ENCODE measurements at regions of chr1 and their contacts with region 1.

Region 1: GRCh38 chr1:230186003-230186863 is 119.2 kb downstream of the GALNT2 start:
- DNase-seq: peak; percentile 100
- ATAC-seq: peak; percentile 99
- H3K4me3 ChIP-seq: peak overlapping the region; percentile 43
- H3K27ac ChIP-seq: peak overlapping the region; percentile 65
- H3K4me1 ChIP-seq: peaks cover 23% of the 10 kb centered on the region
- H3K27me3 ChIP-seq: no peaks in the 10 kb centered on the region
- CTCF ChIP-seq: no peak

Region 2: DNA sequence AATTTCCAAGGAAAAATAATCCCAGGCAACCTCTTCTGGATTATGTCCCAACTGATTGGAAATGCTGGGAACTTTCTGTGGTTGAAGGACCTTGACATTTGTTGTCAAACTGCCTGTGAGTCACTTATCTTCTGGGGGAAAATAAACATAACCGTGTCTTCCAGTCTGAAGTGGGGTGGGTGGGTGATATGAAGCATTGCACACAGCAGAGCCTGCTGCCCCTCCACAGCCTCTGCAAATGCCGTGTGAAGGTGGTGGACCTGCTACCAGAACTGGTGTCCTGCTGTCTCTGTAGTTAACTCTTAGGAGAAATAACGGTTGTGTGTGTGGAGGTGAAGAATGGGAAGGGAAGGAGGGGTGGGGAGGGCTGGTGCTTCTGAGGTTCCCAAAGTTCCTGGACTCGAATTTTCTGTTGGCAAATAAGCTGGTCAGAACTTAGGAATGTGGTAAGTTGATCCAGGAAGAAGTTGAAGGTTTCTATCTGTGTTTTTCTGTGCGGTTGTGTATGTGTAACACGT is 96.0 kb before region 1 on chr1:
- CTCF ChIA-PET with region 1: no interaction called
- POLR2A ChIA-PET with region 1: interaction called, 5 read pairs
- intact Hi-C with region 1: loop called (anchors 1 kb)
- DNase-seq: peak; percentile 96
- ATAC-seq: peak; percentile 69
- H3K4me3 ChIP-seq: peak overlapping the region; percentile 49
- H3K27ac ChIP-seq: peak overlapping the region; percentile 90
- H3K4me1 ChIP-seq: peaks cover 82% of the 10 kb centered on the region
- H3K27me3 ChIP-seq: no peaks in the 10 kb centered on the region
- CTCF ChIP-seq: no peak

Region 3: DNA sequence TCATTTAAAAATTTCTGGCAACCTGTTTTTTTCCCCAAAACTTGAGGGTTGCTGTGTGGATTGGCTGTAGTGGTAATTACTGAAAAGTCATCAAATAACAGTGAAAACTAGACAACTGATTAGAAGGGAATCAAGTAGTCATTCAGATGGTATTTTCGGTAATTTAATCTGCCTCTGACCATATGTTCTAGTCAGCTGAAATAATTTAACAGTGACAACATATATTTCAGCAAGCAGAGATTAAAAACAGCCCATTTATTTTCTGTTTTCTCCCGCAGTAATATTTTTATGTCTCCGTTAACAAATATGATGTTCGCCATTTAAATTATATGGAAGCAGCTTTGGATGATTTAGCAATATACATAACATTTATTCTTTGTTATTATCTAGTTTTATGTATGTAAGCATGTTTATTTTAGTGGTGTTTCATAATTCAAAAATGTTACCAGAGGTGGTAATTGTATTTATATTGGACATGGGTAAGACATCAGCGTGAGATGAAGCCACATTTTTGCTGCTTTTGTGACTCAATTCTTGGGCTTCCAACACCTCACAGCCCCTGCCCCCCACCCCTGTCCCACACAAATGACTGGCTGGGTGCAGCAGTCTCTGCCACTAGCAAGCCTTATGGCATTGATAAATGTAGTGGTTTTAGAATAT is 14.7 kb before region 1 on chr1:
- CTCF ChIA-PET with region 1: interaction called, 7 read pairs
- POLR2A ChIA-PET with region 1: no interaction called
- intact Hi-C with region 1: loop called (anchors 1 kb)
- DNase-seq: peak; percentile 75
- ATAC-seq: peak; percentile 83
- H3K4me3 ChIP-seq: peak overlapping the region; percentile 15; the same call in 1 of the 2 replicates
- H3K27ac ChIP-seq: peak overlapping the region; percentile 61
- H3K4me1 ChIP-seq: peaks cover 34% of the 10 kb centered on the region
- H3K27me3 ChIP-seq: no peaks in the 10 kb centered on the region
- CTCF ChIP-seq: no peak

Region 4: GRCh38 chr1:230599926-230600653 is 413.9 kb after region 1 on chr1:
- CTCF ChIA-PET with region 1: no interaction called
- POLR2A ChIA-PET with region 1: interaction called, 12 read pairs
- intact Hi-C with region 1: no loop called
- DNase-seq: no peak
- ATAC-seq: no peak
- H3K4me3 ChIP-seq: no peak overlapping the region
- H3K27ac ChIP-seq: no peak overlapping the region
- H3K4me1 ChIP-seq: no peaks in the 10 kb centered on the region
- H3K27me3 ChIP-seq: peaks cover 69% of the 10 kb centered on the region
- CTCF ChIP-seq: no peak

Measured in PC-3 (cell line).